ENCODE measurements at regions of chr19 and their contacts with region 1.

Region 1: DNA sequence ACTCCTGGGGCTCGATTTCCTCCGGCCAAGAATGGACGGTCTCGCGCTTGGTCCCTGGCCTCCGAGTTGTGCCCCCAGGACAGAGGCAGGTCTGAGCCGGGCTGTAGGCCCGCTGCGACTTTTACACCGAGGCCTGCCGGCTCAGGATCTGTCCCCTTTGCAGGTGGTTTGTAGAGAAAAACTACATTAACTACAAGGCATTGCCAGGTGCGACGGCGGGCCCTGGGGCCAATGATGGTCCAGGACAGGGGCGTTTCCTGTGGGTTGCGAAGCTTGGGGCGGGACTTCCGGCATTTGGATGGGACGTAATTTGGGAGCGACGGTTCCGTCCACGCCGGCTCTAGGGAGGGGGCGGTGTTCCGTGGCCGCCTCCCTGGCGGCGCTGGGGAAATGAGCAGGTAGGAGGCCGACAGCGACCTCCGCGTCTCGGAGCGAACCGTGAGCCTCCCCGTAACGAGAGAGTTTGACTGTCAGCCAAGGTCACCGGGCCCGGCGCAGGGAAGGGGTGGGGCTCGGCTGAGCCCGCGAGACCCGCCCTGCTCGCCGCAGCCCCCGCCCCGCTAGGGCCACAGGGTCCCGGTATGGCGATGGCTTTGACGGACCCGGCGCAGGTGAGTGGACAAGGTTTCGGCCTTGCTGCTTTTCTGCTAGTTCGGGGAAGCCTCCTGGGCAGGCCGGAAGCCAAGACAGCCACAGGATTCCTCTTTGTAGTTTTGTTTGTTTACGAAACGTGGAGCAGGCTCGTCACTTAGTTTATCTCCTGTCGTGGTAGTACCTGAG is at the start of gene ZNF805:
- DNase-seq: peak; percentile 96 to 98
- H3K4me3 ChIP-seq: peak within 1 kb of the TSS; percentile 69 to 89
- H3K27ac ChIP-seq: peak within 1 kb of the TSS; percentile 83 to 86
- H3K4me1 ChIP-seq: peaks cover 0 to 27% (median 19%) of the 10 kb centered on the region in 4 donors
- H3K27me3 ChIP-seq: no peaks in the 10 kb centered on the region
- CTCF ChIP-seq: peak in 1 of 2 experiments; percentile 30

Region 2: DNA sequence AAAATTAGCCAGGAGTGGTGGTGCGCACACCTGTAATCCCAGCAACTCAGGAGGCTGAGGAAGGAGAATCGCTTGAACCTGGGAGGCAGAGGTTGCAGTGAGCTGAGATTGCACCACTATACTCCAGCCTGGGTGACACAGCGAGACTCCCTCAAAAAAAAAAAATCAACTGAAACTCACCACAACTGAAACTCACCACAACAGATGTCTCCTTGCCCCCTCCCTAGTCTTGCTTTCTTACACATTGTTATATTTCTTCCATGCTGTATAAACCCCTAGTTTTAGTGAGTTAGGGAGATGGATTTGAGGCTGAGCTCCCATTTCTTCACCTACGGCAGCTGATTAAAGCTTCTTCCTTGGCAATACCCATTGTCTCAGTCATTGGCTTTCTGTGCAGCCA is 98.8 kb before region 1 on chr19:
- intact Hi-C with region 1: no loop called
- DNase-seq: no peak
- H3K4me3 ChIP-seq: no peak overlapping the region
- H3K27ac ChIP-seq: no peak overlapping the region
- H3K4me1 ChIP-seq: no peaks in the 10 kb centered on the region
- H3K27me3 ChIP-seq: no peaks in the 10 kb centered on the region
- CTCF ChIP-seq: no peak

Region 3: GRCh38 chr19:57212109-57212508 is 28.4 kb before region 1 on chr19:
- intact Hi-C with region 1: no loop called
- DNase-seq: no peak
- H3K4me3 ChIP-seq: no peak overlapping the region
- H3K27ac ChIP-seq: no peak overlapping the region
- H3K4me1 ChIP-seq: no peaks in the 10 kb centered on the region
- H3K27me3 ChIP-seq: no peaks in the 10 kb centered on the region
- CTCF ChIP-seq: no peak

Region 4: DNA sequence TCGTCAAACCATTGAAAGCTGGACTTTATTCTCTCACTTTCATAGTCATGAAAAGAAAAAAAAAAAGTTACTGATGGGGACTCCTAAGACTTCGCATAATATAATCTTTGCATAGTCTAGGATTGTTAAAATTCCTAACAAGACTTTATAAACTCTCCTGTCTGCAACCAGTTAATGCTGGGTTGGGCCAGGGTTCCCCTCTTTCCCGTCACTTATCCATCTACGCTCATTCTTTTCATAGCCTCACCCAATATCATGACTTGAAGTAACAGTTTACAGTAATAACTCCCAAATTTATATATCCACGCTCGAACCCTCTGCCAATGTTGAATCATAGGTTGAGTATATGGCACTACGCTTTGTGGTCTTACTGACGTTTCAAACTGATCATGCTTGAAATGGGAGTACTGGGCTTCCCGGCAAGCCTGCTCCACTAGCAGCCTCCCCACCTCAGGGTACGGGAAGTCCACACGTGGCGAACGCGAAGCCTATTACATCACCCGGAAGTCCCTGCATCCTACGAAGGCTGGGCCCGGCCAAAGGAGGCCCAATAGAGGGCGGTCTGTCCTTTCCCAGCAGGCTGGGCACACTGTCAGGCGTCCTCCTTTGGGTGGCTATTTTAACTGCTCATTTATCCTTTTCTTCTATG is 39.0 kb after region 1 on chr19:
- intact Hi-C with region 1: loop called (anchors 5 kb)
- DNase-seq: peak; percentile 90 to 95
- H3K4me3 ChIP-seq: peak overlapping the region; percentile 70 to 98
- H3K27ac ChIP-seq: peak overlapping the region; percentile 97 to 99
- H3K4me1 ChIP-seq: peaks cover 0 to 28% (median 20%) of the 10 kb centered on the region in 4 donors
- H3K27me3 ChIP-seq: no peaks in the 10 kb centered on the region
- CTCF ChIP-seq: peak in 1 of 2 experiments; percentile 19

Region 5: GRCh38 chr19:57362997-57363705 is 122.7 kb after region 1 on chr19 and contains the starts of genes TRAPPC2B and ZNF547:
- intact Hi-C with region 1: loop called (anchors 2 kb)
- DNase-seq: peak; percentile 99 to 100
- H3K4me3 ChIP-seq: peak within 1 kb of the TSS; percentile 70 to 80
- H3K27ac ChIP-seq: peak within 1 kb of the TSS; percentile 92 to 97
- H3K4me1 ChIP-seq: peaks cover 0 to 19% (median 6%) of the 10 kb centered on the region in 4 donors
- H3K27me3 ChIP-seq: no peaks in the 10 kb centered on the region
- CTCF ChIP-seq: no peak

Region 6: DNA sequence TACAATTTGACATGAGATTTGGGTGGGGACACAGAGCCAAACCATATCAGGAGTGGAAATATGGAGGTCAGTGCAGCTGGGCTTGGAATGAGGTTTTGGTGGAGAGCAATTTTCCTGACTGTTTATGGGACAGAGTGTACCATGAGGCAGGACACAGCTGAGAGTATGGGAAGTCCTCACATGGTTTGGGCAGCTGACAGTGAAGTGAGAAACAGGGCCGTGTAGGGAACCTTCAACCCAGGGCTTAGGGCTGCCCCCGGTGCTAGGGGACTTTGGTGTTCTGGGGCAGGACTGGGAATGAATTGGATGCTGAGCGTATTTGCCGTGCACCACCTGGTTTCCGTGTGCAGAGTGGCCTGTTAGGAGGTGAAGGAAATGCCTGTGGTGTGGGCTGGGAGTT is 155.2 kb after region 1 on chr19:
- intact Hi-C with region 1: no loop called
- DNase-seq: no peak
- H3K4me3 ChIP-seq: no peak overlapping the region
- H3K27ac ChIP-seq: no peak overlapping the region
- H3K4me1 ChIP-seq: peaks cover 0 to 7% (median 3%) of the 10 kb centered on the region in 4 donors
- H3K27me3 ChIP-seq: no peaks in the 10 kb centered on the region
- CTCF ChIP-seq: no peak